Breast epithelium (tissue), 4 donors: ENCODE measurements at regions of chr4 and their contacts with region 1.

Region 1: GRCh38 chr4:152651473-152652060 is 28.2 kb downstream of the TMEM154 start:
- DNase-seq: no peak
- H3K4me3 ChIP-seq: no peak overlapping the region
- H3K27ac ChIP-seq: no peak overlapping the region
- H3K4me1 ChIP-seq: no peaks in the 10 kb centered on the region
- H3K27me3 ChIP-seq: no peaks in the 10 kb centered on the region
- CTCF ChIP-seq: no peak
- POLR2A ChIP-seq: no peak

Region 2: DNA sequence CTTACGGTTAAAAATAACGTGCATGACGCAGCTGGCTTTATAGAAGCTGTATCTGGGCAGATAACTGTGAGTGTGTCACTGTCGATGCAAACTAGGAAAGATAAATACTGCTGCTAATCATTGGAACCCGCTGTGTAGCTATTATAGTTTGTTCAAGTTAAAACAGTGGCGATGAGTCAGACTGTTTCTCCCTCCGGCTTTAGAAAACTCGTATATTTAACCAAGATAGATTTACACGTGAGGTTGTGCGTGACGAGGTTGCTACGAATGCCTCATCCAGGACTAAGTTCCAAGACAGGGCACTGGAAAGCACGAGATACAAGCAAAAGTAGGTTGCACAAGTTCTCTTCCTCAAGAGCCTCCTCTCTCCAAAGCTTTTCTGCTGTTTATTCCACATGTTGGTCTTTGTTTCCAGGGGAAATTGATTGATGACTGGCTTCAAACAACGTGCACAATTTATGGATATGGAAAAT is 386.4 kb before region 1 on chr4:
- intact Hi-C with region 1: loop called (anchors 5 kb)
- DNase-seq: no peak
- H3K4me3 ChIP-seq: no peak overlapping the region
- H3K27ac ChIP-seq: no peak overlapping the region
- H3K4me1 ChIP-seq: no peaks in the 10 kb centered on the region
- H3K27me3 ChIP-seq: no peaks in the 10 kb centered on the region
- CTCF ChIP-seq: no peak
- POLR2A ChIP-seq: no peak